PC-3 (cell line): ENCODE measurements at regions of chr16 and their contacts with region 1.

Region 1: GRCh38 chr16:71276589-71277334 is 12.4 kb downstream of the CMTR2 start:
- DNase-seq: no peak
- ATAC-seq: no peak
- H3K4me3 ChIP-seq: no peak overlapping the region
- H3K27ac ChIP-seq: no peak overlapping the region
- H3K4me1 ChIP-seq: no peaks in the 10 kb centered on the region
- H3K27me3 ChIP-seq: no peaks in the 10 kb centered on the region
- CTCF ChIP-seq: no peak

Region 2: DNA sequence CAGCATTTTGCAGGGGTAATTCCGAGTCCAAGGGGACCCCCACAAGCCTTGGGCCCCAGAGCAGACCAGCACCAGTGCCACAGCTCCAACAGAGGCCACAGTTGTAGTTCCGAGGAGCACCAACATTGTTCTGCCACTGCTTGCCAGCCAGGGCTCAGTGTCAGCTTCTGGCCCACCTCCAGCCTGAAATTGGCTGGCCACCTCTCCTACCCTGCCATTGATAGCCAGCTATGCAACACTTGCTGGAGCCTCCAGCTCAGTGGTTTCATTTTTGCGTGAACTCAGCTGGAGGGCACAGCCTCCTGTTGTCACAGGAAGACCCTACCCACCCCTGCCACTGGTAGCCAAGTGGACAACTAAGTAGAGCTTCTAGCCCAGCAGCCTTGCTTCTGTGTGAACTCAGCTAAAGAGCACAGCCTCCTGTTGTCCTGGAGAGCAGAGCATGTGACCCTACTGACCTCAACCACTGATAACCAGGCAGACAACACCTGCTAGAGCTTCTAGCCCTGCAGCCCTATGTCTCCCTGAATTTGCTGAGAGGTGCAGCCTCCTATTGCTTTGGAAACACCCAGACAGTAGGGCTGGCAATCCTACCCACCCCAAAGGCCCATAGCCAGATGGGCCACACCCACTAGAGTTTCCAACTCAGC is 71.2 kb before region 1 on chr16:
- CTCF ChIA-PET with region 1: no interaction called
- POLR2A ChIA-PET with region 1: no interaction called
- intact Hi-C with region 1: no loop called
- DNase-seq: no peak
- ATAC-seq: no peak
- H3K4me3 ChIP-seq: no peak overlapping the region
- H3K27ac ChIP-seq: no peak overlapping the region
- H3K4me1 ChIP-seq: peaks cover 4% of the 10 kb centered on the region; the same call in 1 of the 2 replicates
- H3K27me3 ChIP-seq: no peaks in the 10 kb centered on the region
- CTCF ChIP-seq: no peak

Region 3: DNA sequence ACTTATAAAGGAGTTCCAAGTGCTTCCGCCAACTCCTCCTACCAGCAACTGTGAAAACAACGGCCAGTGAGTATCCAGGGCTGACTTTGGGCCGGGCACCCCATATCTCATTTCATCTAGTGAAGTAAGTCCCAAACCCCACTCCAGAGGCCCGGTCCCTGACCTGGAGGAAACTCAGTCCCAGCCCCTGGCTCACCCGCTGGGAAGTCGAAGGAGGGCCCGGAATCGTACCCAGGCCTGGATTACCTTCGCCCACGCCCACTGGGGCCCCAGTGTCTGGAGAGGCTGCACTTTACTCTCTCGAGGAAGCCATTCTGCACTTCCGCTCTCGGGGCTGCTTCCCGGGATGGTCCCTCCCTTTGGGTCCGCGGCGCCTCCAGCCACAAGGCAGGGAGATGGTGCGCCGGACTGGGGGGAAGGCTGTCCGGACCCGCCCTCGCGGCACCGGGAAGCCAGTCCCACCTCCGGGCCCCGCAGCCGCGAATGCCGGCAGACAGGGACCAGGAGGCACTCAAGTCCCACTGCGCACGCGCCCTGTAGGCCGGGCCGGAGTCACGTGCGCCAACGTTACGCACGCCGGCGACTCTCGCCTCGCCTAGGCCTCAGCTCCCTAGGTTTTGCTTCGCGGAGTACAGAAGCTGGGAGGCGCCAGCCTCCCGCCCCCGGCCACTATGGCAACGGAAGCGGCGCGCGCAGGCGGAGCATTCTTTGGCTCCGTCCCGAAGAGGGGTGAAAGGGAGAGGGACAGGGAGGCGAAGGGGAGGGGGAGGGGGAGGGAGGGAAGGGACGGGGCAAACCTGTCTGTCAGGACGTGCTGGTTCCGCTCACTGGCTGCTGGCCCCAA is 12.3 kb after region 1 on chr16 and contains the start of gene CMTR2:
- CTCF ChIA-PET with region 1: no interaction called
- POLR2A ChIA-PET with region 1: interaction called, 11 read pairs
- intact Hi-C with region 1: no loop called
- DNase-seq: peak; percentile 95
- ATAC-seq: peak; percentile 94
- H3K4me3 ChIP-seq: peak within 1 kb of the TSS; percentile 87
- H3K27ac ChIP-seq: peak within 1 kb of the TSS; percentile 73
- H3K4me1 ChIP-seq: peaks cover 17% of the 10 kb centered on the region
- H3K27me3 ChIP-seq: no peaks in the 10 kb centered on the region
- CTCF ChIP-seq: no peak
- total RNA-seq, gene CMTR2: 14.7 and 15.3 TPM in 2 replicates